ENCODE measurements at regions of chr7 and their contacts with region 1.

Region 1: DNA sequence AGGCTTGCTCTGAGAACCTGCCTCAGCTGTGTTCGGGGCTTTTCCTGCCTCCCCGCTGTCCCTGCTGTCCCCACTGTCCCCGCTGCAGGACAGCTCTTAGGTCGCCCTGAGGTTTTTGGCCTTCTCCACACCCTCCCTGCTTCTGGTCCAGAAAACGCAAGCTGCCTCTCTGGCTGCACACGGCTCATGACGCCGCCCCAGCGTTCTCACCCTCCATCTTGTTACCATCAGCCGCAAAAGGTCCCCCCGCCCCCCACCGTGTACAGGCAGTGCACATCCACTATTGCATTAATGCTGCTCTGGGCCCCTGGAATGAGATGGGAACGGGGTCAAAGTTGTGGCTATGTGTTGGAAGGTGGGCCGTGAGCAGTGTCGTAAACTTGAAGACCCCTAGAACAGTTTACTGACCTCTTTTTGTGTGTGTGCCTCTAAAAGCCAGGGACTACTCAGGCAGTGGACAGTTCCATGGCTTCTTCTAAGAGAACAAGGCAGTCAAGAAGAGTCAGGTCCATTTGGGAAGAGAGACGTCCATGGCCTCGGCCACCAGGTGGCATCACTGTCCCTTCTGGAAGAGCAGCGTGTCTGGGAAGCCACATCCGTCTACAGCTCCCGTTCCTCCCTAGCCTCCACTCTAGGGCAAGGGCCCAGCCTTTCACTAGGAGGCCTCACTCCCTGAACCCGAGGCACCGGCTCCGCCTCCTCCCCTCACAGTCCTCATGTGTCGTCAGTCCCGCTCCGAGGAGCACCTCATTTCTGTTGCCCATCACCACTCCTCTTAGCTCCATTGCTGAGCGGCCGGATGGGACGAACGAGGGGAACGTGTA is 38.5 kb upstream of the MKRN1 start:
- DNase-seq: peak; percentile 89 to 91 (median 90)
- ATAC-seq: peak; percentile 100
- H3K4me3 ChIP-seq: no peak overlapping the region
- H3K27ac ChIP-seq: no peak overlapping the region
- H3K4me1 ChIP-seq: no peaks in the 10 kb centered on the region
- H3K27me3 ChIP-seq: no peaks in the 10 kb centered on the region
- CTCF ChIP-seq: peak; percentile 83 to 93 (median 90)
- POLR2A ChIP-seq: no peak

Region 2: GRCh38 chr7:140439359-140439758 is 78.4 kb before region 1 on chr7:
- intact Hi-C with region 1: no loop called
- DNase-seq: no peak
- ATAC-seq: peak in 1 of 4 donors; percentile 48
- H3K4me3 ChIP-seq: no peak overlapping the region
- H3K27ac ChIP-seq: no peak overlapping the region
- H3K4me1 ChIP-seq: no peaks in the 10 kb centered on the region
- H3K27me3 ChIP-seq: no peaks in the 10 kb centered on the region
- CTCF ChIP-seq: no peak
- POLR2A ChIP-seq: no peak

Region 3: DNA sequence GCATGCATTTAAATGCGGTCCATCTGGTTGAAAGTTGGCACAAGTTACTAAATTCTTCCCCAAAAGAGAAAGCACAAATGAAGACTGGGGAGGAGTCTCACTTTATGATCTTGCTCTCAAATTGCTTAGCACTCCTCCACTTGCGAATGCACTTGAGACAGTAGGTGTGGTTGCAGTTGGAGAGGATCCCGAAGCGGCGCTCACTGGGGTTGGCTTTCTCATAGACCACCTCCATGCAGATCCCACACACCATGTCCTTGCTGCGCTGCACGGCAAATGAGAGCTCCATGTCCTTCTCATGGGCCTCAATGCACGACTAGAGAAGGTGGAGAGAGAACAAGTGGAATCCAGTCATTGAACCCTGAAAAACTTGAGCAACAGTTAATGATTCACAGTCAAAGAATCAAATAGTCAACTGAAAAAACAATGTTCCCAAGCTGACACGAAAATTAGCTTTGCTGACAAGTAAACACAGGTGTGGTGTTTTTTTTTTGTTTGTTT is 61.2 kb before region 1 on chr7:
- intact Hi-C with region 1: no loop called
- DNase-seq: no peak
- ATAC-seq: peak; percentile 47 to 70 (median 60)
- H3K4me3 ChIP-seq: no peak overlapping the region
- H3K27ac ChIP-seq: no peak overlapping the region
- H3K4me1 ChIP-seq: peaks cover 0 to 12% (median 0%) of the 10 kb centered on the region in 4 donors
- H3K27me3 ChIP-seq: no peaks in the 10 kb centered on the region
- CTCF ChIP-seq: no peak
- POLR2A ChIP-seq: no peak

Region 4: DNA sequence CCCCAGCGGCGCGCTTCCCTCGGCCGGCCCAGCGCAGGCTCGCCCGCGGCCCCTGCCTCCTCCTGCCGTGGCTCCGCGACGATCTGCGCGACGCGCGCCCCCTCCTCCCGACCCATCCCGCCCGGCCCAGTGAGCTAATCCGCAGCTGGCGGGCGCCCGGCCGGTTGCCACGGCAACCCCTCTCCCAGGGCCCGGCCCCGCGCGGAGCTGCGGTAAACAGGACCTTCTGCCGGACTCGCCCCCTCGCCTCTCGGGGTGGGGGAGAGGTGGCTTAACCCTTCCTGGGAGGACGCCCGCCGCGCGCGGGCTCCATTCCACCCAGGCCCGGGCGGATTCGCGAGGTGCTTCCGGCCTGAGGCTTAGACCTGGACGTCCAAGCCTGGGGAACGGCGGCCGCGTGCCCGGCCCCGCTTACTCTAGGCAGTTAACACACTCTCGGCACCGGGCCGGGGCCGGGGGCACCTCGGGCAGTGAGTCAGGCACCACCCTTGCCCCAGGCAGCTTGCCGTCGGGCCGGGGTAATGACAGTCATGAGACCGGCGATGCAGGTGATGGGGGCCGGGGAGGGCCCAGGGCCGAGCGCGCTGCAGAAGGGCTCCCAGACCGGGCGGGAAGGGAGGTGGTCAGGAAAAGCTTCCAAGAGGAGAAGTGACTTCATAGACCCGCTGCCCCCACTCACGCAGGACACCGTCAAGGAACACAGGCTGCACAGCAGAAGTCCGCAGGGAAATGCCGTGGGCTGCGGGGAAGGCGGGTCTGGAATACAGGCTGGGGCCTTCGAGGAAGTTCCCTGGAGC is 123.2 kb after region 1 on chr7 and contains the start of gene DENND2A:
- intact Hi-C with region 1: no loop called
- DNase-seq: peak in 2 of 3 donors; percentile 64 to 67
- ATAC-seq: peak; percentile 51 to 55 (median 54)
- H3K4me3 ChIP-seq: peak within 1 kb of the TSS; percentile 39 to 47 (median 40)
- H3K27ac ChIP-seq: peak within 1 kb of the TSS; percentile 56 to 73 (median 59)
- H3K4me1 ChIP-seq: no peaks in the 10 kb centered on the region
- H3K27me3 ChIP-seq: peaks cover 0 to 4% of the 10 kb centered on the region in 2 donors
- CTCF ChIP-seq: no peak
- POLR2A ChIP-seq: peak; percentile 14
- total RNA-seq, gene DENND2A: 1.4 to 3.6 (median 2.4) TPM

Region 5: GRCh38 chr7:140653319-140654108 is 135.8 kb after region 1 on chr7:
- intact Hi-C with region 1: loop called (anchors 2 to 5 kb)
- DNase-seq: peak; percentile 64 to 90 (median 82)
- ATAC-seq: peak; percentile 81 to 90 (median 84)
- H3K4me3 ChIP-seq: no peak overlapping the region
- H3K27ac ChIP-seq: peak overlapping the region in 1 of 3 donors; percentile 50
- H3K4me1 ChIP-seq: peaks cover 0 to 18% (median 1%) of the 10 kb centered on the region in 4 donors
- H3K27me3 ChIP-seq: no peaks in the 10 kb centered on the region
- CTCF ChIP-seq: peak; percentile 85 to 96 (median 86)
- POLR2A ChIP-seq: no peak

Region 6: DNA sequence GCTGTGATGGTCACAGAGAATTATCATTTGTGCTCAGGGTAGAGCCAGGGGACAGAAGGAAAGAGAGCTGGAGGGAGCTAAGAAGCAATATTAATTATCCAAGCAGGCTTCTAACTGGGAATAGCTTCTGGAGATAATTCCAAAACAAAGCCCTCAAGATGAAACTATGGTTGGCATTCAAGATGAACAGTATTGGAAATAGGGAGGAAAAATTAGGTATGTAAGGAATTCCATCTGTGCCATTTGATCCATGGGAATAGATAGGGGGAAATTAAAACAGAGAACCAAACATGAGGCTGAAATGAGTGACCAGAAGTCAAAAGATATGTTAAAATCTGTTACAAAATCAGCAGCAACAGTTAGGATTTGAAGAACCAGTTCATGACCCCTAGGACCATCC is 254.1 kb after region 1 on chr7:
- intact Hi-C with region 1: no loop called
- DNase-seq: no peak
- ATAC-seq: no peak
- H3K4me3 ChIP-seq: no peak overlapping the region
- H3K27ac ChIP-seq: no peak overlapping the region
- H3K4me1 ChIP-seq: no peaks in the 10 kb centered on the region
- H3K27me3 ChIP-seq: no peaks in the 10 kb centered on the region
- CTCF ChIP-seq: no peak
- POLR2A ChIP-seq: no peak

Measured in right lobe of liver (tissue), 6 donors.